Prostate gland (tissue), 2 donors: ENCODE measurements at regions of chr3 and their contacts with region 1.

Region 1: DNA sequence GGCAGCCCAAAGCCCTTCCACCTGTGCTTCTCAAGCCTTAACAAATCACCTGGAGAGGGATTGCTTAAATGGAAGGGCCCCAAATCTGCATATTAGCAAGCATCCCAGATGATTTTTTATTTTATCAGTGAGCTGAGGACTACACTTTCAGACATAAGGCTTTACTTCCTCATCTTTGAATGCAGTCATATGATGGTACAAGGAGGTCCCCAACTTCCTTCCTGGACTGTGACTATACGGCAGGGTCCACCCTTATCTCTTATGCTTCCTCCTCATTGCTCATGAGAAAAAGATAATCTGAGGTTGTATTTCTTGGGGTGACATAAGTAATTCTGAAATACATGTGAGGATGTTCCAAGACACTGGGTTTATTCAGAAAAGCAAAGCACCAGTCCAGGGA is 13.7 kb upstream of the HEG1 start:
- DNase-seq: no peak
- H3K4me3 ChIP-seq: no peak overlapping the region
- H3K27ac ChIP-seq: no peak overlapping the region
- H3K4me1 ChIP-seq: no peaks in the 10 kb centered on the region
- H3K27me3 ChIP-seq: no peaks in the 10 kb centered on the region
- CTCF ChIP-seq: no peak
- POLR2A ChIP-seq: no peak

Region 2: DNA sequence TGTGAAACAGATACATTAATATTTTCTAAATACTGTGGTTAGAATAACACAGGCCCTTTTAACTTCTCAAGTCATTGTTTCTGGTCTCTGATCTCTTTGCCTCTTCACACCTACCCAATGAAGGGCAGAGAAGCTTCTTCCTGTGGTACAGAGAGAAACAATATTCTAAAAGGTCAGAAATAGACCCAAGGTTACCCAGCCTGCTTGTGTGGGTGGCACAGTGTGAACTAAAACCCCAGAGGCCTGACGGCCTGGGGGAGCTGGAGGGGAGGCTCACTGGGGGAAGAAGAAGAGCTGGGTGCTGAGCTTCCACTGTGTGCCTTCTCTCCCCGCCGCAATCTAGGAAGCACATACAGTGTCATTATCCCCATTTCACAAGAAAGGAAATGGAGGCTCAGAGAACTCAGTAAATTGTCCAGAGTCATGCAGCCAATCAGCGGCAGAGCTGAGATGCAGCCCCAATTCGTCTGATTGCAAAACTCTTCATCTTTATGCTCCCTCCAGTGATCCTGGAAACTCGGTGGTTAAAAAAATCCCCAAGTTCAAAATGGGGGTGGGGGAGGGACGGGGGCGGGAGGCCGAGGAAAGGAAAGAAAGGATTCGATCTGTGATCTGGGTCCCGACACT is 50.4 kb after region 1 on chr3:
- intact Hi-C with region 1: loop called (anchors 5 kb)
- DNase-seq: no peak
- H3K4me3 ChIP-seq: no peak overlapping the region
- H3K27ac ChIP-seq: no peak overlapping the region
- H3K4me1 ChIP-seq: no peaks in the 10 kb centered on the region
- H3K27me3 ChIP-seq: no peaks in the 10 kb centered on the region
- CTCF ChIP-seq: no peak
- POLR2A ChIP-seq: no peak